ENCODE measurements at regions of chr12 and their contacts with region 1.

Region 1: GRCh38 chr12:124466216-124467128 is 100.9 kb downstream of the NCOR2 start:
- DNase-seq: peak; percentile 64
- H3K4me3 ChIP-seq: no peak overlapping the region
- H3K27ac ChIP-seq: peak overlapping the region; percentile 71
- H3K4me1 ChIP-seq: peaks cover 12% of the 10 kb centered on the region
- H3K27me3 ChIP-seq: no peaks in the 10 kb centered on the region
- CTCF ChIP-seq: peak in 1 of 2 donors; percentile 17
- POLR2A ChIP-seq: no peak

Region 2: GRCh38 chr12:124359671-124360581 is 106.5 kb before region 1 on chr12:
- CTCF ChIA-PET with region 1: no interaction called
- POLR2A ChIA-PET with region 1: no interaction called
- dilution Hi-C with region 1: no loop called
- intact Hi-C with region 1: loop called (anchors 5 kb)
- DNase-seq: no peak
- H3K4me3 ChIP-seq: no peak overlapping the region
- H3K27ac ChIP-seq: no peak overlapping the region
- H3K4me1 ChIP-seq: no peaks in the 10 kb centered on the region
- H3K27me3 ChIP-seq: no peaks in the 10 kb centered on the region
- CTCF ChIP-seq: no peak
- POLR2A ChIP-seq: no peak

Region 3: GRCh38 chr12:124369901-124370378 is 96.5 kb before region 1 on chr12:
- CTCF ChIA-PET with region 1: no interaction called
- POLR2A ChIA-PET with region 1: no interaction called
- dilution Hi-C with region 1: no loop called
- intact Hi-C with region 1: no loop called
- DNase-seq: no peak
- H3K4me3 ChIP-seq: no peak overlapping the region
- H3K27ac ChIP-seq: peak overlapping the region; percentile 61
- H3K4me1 ChIP-seq: peaks cover 29% of the 10 kb centered on the region
- H3K27me3 ChIP-seq: no peaks in the 10 kb centered on the region
- CTCF ChIP-seq: no peak
- POLR2A ChIP-seq: no peak

Region 4: DNA sequence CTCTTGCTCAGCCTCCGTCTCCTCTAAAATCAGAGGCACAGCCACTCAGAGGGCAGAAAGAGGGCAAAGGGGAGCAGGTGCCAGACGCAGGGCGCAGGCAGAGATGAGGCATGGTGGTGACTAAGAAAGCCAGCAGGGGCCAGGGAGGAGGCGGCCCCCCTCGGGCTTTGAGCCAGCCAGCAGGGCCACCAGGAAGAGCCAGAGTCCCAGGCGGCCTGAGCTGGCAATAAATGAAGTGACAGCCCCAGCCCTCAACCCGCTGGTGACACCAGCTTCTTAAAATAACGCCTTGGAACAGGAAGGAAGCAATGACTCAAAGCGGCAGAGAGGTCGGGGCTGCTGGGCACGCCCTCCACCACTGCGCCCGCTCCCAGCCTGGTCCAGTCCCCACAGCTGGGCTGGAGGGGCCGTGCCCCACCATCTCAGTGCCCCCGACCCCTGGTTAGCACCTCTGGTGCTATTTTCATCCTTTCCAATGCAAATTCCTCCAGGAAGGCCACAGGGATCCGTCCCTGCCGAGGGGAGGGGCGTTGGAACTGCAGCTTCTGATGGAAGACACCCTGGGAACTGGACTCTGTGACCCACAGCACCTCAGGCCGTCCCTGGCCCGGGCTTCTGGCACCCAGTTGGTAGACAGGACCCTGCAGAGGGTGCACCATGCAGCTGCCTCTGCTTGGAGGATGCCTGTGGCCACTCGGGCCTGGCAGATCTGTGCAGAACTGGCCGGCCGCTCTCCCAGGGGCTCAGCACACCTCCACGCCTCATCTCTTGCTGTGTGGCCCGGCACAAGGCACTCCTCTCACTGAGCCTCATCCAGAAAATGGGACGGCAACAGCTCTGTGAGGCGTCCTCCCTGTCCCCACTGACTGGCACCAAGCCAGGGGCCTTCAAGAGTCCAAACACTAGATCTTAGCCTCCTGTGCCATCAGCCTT is 12.8 kb before region 1 on chr12:
- CTCF ChIA-PET with region 1: interaction called, 7 read pairs
- POLR2A ChIA-PET with region 1: no interaction called
- dilution Hi-C with region 1: no loop called
- intact Hi-C with region 1: loop called (anchors 2 kb)
- DNase-seq: peak; percentile 80
- H3K4me3 ChIP-seq: no peak overlapping the region
- H3K27ac ChIP-seq: peak overlapping the region; percentile 81
- H3K4me1 ChIP-seq: peaks cover 29% of the 10 kb centered on the region
- H3K27me3 ChIP-seq: no peaks in the 10 kb centered on the region
- CTCF ChIP-seq: no peak
- POLR2A ChIP-seq: no peak

Region 5: DNA sequence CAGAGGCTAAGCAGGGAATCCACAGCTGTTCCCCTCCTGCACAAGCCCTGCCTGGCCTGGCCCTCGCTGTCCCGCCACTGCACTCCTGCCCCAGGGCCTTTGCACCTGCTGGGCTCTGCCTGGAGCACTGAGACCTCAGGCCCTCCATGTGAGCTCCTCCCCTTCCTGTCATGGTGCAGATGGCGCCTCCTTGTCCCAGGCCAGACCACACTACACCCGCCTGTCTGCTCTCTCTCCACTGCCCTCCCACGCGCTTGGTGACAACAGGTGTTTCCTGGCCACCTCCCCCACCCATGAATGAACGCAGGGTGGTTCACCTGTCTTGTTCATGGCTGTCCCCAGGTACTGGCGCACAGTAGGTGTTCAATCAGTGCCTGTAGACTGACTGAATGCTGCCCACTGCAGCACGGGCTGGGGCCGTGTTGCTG is 18.1 kb after region 1 on chr12:
- CTCF ChIA-PET with region 1: no interaction called
- POLR2A ChIA-PET with region 1: no interaction called
- dilution Hi-C with region 1: no loop called
- intact Hi-C with region 1: no loop called
- DNase-seq: no peak
- H3K4me3 ChIP-seq: no peak overlapping the region
- H3K27ac ChIP-seq: no peak overlapping the region
- H3K4me1 ChIP-seq: no peaks in the 10 kb centered on the region
- H3K27me3 ChIP-seq: no peaks in the 10 kb centered on the region
- CTCF ChIP-seq: no peak
- POLR2A ChIP-seq: no peak

Measured in endothelial cell of umbilical vein (primary cell).